ENCODE measurements at regions of chrX and their contacts with region 1.

Region 1: GRCh38 chrX:65575022-65575421 is 40.4 kb upstream of the LAS1L start:
- DNase-seq: no peak
- H3K4me3 ChIP-seq: no peak overlapping the region
- H3K27ac ChIP-seq: no peak overlapping the region
- H3K4me1 ChIP-seq: no peaks in the 10 kb centered on the region
- H3K27me3 ChIP-seq: no peaks in the 10 kb centered on the region
- CTCF ChIP-seq: no peak
- POLR2A ChIP-seq: no peak

Region 2: DNA sequence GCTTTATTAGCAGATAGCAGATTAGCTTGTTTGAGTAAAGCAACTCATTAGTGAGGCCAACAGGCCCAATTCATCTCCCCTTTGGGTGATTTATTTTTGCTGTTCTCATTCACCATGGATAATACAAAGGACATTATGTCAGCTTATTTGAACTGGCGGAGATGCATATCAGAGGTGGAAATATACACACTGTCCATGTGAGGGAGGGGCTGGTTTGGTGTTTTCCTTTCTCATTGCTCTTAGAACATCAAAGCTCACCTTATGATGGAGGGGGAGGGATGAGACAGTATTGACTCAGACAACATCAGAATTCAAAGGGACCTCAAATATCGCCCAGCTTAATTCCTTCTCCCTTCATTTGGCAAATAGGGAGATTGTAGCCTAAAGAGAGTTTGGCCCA is 311.8 kb after region 1 on chrX:
- intact Hi-C with region 1: no loop called
- DNase-seq: no peak
- H3K4me3 ChIP-seq: no peak overlapping the region
- H3K27ac ChIP-seq: no peak overlapping the region
- H3K4me1 ChIP-seq: no peaks in the 10 kb centered on the region
- H3K27me3 ChIP-seq: no peaks in the 10 kb centered on the region
- CTCF ChIP-seq: no peak
- POLR2A ChIP-seq: no peak

Region 3: GRCh38 chrX:66004928-66005829 is 430.2 kb after region 1 on chrX:
- intact Hi-C with region 1: loop called (anchors 10 kb)
- DNase-seq: no peak
- H3K4me3 ChIP-seq: no peak overlapping the region
- H3K27ac ChIP-seq: no peak overlapping the region
- H3K4me1 ChIP-seq: no peaks in the 10 kb centered on the region
- H3K27me3 ChIP-seq: no peaks in the 10 kb centered on the region
- CTCF ChIP-seq: no peak
- POLR2A ChIP-seq: no peak